ENCODE measurements at regions of chr3 and their contacts with region 1.

Region 1: DNA sequence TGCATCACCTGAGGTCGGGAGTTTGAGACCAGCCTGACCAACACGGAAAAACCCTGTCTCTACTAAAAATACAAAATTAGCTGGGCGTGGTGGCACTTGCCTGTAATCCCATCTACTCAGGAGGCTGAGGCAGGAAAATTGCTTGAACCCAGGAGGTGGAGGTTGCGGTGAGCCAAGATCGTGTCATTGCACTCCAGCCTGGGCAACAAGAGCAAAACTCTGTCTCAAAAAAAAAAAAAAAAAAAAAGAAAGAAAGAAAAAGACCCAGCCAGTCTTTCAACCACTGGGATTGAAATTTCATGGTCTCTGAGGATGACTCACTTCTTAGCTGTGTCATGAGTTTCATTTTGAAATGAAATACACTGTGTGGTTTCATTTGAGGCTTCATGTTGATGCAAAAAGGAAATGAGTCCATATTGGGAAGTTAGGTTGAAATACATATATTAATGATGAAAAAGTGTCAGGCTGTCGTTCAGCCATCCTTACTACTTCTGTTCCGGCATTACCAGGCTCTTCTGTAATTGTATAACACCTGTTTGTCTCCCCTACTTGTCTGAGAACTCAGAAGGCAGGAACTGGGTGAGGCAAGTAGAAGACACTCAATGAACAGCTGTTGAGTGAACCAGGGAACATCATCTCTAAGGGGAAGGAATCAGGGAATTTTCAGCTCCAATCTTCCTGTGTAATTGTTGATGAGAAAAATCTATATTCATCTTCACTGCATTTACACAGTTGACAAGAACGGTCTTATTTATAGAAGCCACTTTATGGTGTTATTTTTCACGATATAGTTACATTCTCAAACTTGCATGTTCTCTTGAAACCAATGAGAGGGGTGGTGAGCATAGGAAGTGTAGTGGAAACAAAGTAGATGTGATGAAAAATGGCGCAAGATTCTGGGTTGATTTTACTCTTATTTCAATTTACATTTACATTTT is 87.4 kb downstream of the NFKBIZ start:
- DNase-seq: no peak
- ATAC-seq: peak; percentile 78
- H3K4me3 Mint-ChIP-seq: peak overlapping the region; percentile 76
- H3K27ac Mint-ChIP-seq: peak overlapping the region; percentile 94
- H3K4me1 Mint-ChIP-seq: peaks cover 49% of the 10 kb centered on the region
- H3K27me3 Mint-ChIP-seq: no peaks in the 10 kb centered on the region
- CTCF ChIP-seq: no peak

Region 2: DNA sequence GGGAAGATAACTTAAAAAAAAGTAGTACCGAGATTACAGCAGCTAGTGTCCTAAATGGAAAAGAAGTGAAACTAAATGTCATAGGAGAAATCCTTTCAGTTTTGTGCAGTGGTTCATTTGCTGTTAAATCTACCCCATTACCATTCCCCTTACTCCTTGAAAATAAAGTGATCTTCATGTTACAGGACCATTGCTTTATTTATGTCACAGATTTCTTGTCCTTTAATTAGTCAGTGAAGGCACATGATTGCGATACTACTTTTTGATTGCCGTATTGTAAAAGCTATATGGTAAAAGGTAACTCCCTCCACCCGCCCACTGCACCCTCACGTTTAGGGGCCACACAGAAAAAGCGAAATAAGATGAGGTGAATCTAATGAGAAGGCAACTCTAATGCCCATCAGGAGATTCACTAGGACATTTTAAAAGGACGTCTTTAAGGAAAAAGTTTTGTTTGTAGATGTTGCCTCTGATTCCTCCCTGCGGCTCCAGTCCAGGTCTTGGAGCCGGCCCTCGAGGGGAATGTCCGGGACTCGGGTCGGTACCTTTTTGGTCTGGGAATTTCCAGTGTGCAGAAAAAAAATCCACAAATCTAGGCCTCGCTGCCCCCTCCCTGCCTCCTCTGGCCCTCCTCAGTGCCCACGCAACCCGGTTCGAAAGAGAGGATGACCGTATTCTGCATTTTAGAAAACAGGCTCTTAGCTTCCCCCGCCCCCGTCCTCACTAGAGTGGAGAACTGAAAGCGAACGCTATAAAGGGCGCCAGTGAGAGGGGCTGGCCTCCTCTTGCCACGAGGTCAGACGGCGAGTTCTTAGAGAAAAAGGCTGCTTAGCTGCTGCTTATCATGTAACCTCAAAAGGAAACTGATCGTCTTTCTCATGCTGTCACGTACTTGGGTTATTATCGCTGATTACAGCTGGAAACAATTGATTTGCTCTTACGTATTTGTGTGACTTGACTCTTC is 109.2 kb before region 1 on chr3:
- CTCF ChIA-PET with region 1: no interaction called
- POLR2A ChIA-PET with region 1: interaction called, 39 read pairs
- intact Hi-C with region 1: loop called (anchors 1 kb)
- DNase-seq: peak; percentile 68
- ATAC-seq: peak; percentile 86
- H3K4me3 Mint-ChIP-seq: peak overlapping the region; percentile 87
- H3K27ac Mint-ChIP-seq: peak overlapping the region; percentile 98
- H3K4me1 Mint-ChIP-seq: peaks cover 66% of the 10 kb centered on the region
- H3K27me3 Mint-ChIP-seq: no peaks in the 10 kb centered on the region
- CTCF ChIP-seq: no peak

Region 3: GRCh38 chr3:101861212-101861788 is 75.4 kb before region 1 on chr3:
- CTCF ChIA-PET with region 1: interaction called, 3 read pairs
- POLR2A ChIA-PET with region 1: interaction called, 85 read pairs
- intact Hi-C with region 1: loop called (anchors 1 kb)
- DNase-seq: no peak
- ATAC-seq: peak; percentile 64
- H3K4me3 Mint-ChIP-seq: peak overlapping the region; percentile 51
- H3K27ac Mint-ChIP-seq: peak overlapping the region; percentile 75
- H3K4me1 Mint-ChIP-seq: peaks cover 76% of the 10 kb centered on the region
- H3K27me3 Mint-ChIP-seq: no peaks in the 10 kb centered on the region
- CTCF ChIP-seq: no peak

Region 4: DNA sequence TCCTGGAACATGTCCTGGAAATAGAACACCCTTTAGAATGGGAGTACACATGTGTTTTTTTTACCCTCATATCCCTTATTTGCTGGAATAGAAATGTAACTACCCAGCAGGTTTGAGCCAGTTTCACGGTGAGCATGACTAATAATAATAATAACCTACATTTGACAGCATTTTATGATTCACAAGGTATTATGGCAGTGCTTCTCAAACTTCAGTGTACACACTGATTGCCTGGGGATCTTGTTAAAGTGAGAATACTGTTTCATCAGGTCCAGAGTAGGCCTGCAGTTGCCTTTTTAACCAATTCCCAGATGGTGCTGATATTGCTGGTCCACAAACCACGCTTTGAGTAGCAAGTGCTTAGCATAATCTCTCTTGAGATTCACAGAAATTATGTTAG is 23.5 kb before region 1 on chr3:
- CTCF ChIA-PET with region 1: no interaction called
- POLR2A ChIA-PET with region 1: interaction called, 6 read pairs
- intact Hi-C with region 1: loop called (anchors 2 kb)
- DNase-seq: no peak
- ATAC-seq: peak; percentile 21
- H3K4me3 Mint-ChIP-seq: no peak overlapping the region
- H3K27ac Mint-ChIP-seq: no peak overlapping the region
- H3K4me1 Mint-ChIP-seq: peaks cover 15% of the 10 kb centered on the region
- H3K27me3 Mint-ChIP-seq: no peaks in the 10 kb centered on the region
- CTCF ChIP-seq: no peak

Region 5: DNA sequence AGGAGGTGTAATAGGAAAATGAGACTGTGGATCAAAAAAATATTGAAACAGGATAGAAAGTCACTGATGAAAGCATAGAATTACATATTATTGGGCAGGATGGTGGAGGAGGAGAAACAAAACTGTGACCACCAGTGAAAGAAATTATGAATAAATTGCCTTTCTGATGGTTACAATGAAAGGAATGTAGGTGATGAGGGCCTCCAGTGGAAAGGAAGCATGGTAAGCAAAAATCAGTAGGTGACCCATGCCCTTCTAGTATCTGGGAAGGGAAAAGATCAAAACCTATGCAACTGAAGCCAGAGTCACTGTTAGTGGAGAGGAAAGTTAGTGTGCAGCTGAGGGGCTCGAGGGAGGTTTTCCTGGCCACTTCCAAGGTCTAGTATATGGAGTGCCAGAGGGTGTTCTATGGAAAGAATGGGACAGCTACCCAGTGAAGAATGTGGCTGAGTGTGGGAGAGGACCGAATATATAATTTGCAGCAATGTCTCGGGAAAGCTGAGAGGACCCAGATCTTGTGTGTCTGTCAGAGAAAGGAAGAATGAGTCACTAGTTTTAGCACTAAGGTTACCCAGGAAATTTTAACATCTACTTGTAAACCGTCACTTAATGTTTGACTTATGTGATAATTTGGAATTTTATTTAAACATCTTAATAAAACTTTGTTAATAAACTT is 58.8 kb after region 1 on chr3:
- CTCF ChIA-PET with region 1: interaction called, 3 read pairs
- POLR2A ChIA-PET with region 1: interaction called, 45 read pairs
- intact Hi-C with region 1: no loop called
- DNase-seq: no peak
- ATAC-seq: no peak
- H3K4me3 Mint-ChIP-seq: peak overlapping the region; percentile 5
- H3K27ac Mint-ChIP-seq: peak overlapping the region; percentile 78
- H3K4me1 Mint-ChIP-seq: peaks cover 68% of the 10 kb centered on the region
- H3K27me3 Mint-ChIP-seq: no peaks in the 10 kb centered on the region
- CTCF ChIP-seq: no peak

Region 6: DNA sequence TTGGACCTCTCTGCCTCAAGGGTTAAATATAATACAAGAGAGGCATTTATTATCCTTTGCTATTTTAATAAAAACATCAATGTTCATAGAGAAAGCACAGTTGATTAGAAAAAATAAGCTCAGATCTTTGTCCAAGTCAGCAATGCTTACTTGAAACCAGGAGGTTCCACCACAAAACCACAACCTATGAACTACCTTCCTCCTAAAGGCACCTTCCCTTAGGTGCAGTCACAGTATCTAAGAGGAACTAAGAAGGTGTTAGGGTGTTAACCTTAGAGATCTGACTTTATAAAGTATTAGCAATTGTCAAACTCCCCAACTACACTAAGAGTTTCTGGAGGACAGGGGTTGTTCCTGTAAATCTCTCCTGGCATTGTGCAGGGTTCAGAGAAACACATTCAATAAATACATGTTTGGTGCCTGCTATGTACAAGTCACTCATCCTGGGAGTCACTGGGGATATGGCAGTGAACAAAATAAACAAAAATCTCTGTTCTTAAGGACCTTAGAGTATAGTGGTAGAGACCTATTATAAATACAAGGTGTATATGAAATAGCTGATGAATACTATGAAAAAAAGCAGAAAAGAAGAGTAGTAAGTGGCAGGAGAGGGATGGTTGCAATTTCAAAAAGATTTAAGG is 121.2 kb after region 1 on chr3:
- CTCF ChIA-PET with region 1: no interaction called
- POLR2A ChIA-PET with region 1: interaction called, 26 read pairs
- intact Hi-C with region 1: loop called (anchors 1 kb)
- DNase-seq: no peak
- ATAC-seq: peak; percentile 75
- H3K4me3 Mint-ChIP-seq: peak overlapping the region; percentile 42
- H3K27ac Mint-ChIP-seq: peak overlapping the region; percentile 97
- H3K4me1 Mint-ChIP-seq: peaks cover 61% of the 10 kb centered on the region
- H3K27me3 Mint-ChIP-seq: no peaks in the 10 kb centered on the region
- CTCF ChIP-seq: no peak